Ovary (tissue), 10 donors: ENCODE measurements at regions of chr6 and their contacts with region 1.

Region 1: GRCh38 chr6:144931172-144932035 is 646.3 kb downstream of the UTRN start:
- DNase-seq: peak in 2 of 5 donors; percentile 12 to 20
- H3K4me3 ChIP-seq: no peak overlapping the region
- H3K27ac ChIP-seq: no peak overlapping the region
- H3K4me1 ChIP-seq: no peaks in the 10 kb centered on the region
- H3K27me3 ChIP-seq: no peaks in the 10 kb centered on the region
- CTCF ChIP-seq: peak in 1 of 3 donors; percentile 15
- EP300 ChIP-seq: no peak
- POLR2A ChIP-seq: no peak

Region 2: GRCh38 chr6:144582939-144583613 is 348.3 kb before region 1 on chr6:
- intact Hi-C with region 1: loop called in 2 of 4 experiments (anchors 10 kb)
- DNase-seq: peak in 3 of 5 donors; percentile 10 to 41 (median 29)
- H3K4me3 ChIP-seq: no peak overlapping the region
- H3K27ac ChIP-seq: no peak overlapping the region
- H3K4me1 ChIP-seq: peaks cover 2% of the 10 kb centered on the region
- H3K27me3 ChIP-seq: no peaks in the 10 kb centered on the region
- CTCF ChIP-seq: no peak
- EP300 ChIP-seq: no peak
- POLR2A ChIP-seq: no peak

Region 3: DNA sequence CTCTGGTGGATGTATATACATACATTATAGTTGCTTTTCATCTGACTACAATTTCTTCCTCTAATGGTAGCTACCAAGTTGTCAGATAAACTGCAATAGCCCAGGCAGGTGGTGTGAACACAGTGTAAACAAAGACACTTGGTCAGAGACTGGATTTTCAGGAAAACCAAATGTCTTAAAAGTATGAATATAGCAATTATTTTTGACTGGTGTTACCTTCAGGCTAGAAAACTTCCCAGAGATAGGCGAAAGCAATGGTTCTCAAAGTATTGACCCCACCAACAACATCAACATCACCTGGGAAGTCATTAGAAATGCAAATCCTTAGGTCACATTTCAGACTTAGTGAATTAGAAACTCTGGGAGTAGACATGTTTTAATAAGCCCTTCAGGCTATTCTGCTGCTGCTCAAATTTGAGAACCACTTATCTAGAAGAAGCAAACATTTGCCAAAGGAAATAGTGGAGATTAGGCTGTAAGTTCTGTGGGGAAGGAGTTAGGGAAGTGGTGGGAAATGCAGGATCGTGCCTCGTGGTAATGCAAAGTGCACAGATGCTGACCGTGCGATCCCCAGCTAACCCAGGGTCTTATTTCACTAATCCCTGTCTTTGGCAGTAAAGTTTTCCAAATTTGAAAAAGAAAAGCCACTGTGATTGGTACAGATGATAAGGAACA is 475.2 kb after region 1 on chr6:
- intact Hi-C with region 1: no loop called
- DNase-seq: no peak
- H3K4me3 ChIP-seq: no peak overlapping the region
- H3K27ac ChIP-seq: no peak overlapping the region
- H3K4me1 ChIP-seq: no peaks in the 10 kb centered on the region
- H3K27me3 ChIP-seq: no peaks in the 10 kb centered on the region
- CTCF ChIP-seq: no peak
- EP300 ChIP-seq: no peak
- POLR2A ChIP-seq: no peak